ENCODE measurements at regions of chr16 and their contacts with region 1.

Region 1: GRCh38 chr16:4402439-4403132 is 13.8 kb downstream of the CORO7 start:
- DNase-seq: peak; percentile 77
- H3K4me3 Mint-ChIP-seq: no peak overlapping the region
- H3K27ac Mint-ChIP-seq: no peak overlapping the region
- H3K4me1 Mint-ChIP-seq: no peaks in the 10 kb centered on the region
- H3K27me3 Mint-ChIP-seq: no peaks in the 10 kb centered on the region
- CTCF ChIP-seq: peak; percentile 97

Region 2: DNA sequence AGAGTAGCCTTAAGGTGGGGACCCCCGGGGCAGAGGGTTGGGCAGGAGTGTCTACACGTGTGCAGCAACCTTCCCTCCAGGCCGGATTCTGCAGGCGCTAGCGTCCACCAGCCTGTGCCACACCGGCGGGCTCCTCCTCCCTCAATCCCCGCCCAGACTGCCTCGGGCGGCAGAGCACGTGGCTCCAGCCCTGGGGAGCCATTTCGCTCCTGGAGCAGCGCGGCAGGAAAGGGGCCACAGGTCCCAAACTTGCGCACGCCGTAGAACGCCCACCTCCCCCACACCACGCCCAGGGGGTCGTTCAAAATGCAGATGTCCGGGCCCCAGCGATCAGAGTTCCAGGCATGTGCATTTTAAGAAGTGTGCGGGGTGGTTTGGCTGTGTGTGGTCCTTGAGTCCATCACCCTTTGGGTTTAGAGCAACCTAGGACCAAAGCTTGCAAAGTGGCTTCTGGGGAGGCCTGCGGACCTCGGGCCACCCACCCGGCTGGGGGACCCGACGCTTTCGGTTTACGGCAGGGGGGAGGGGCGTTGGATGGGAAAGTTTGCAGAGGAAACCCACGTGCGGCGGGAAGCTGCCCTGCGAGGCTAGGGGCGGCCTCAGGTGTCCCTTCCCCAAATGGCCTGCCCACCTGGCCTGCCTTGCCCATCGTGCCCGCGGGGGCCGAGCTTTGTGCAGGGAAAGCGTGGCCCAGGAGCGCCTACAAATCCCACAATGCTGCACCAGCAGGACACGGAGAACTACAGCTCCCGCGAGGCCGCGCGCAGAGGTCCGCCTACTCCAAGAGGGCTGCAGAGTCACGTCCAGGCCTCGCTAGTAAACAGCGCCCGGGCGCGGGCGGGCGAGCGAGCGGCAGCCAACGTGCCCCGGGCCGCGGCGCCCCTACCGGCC is 131.2 kb before region 1 on chr16:
- CTCF ChIA-PET with region 1: interaction called, 4 read pairs
- POLR2A ChIA-PET with region 1: interaction called, 3 read pairs
- intact Hi-C with region 1: loop called (anchors 5 kb)
- DNase-seq: peak; percentile 92
- H3K4me3 Mint-ChIP-seq: peak overlapping the region; percentile 84
- H3K27ac Mint-ChIP-seq: peak overlapping the region; percentile 67
- H3K4me1 Mint-ChIP-seq: peaks cover 5% of the 10 kb centered on the region
- H3K27me3 Mint-ChIP-seq: no peaks in the 10 kb centered on the region
- CTCF ChIP-seq: no peak

Region 3: DNA sequence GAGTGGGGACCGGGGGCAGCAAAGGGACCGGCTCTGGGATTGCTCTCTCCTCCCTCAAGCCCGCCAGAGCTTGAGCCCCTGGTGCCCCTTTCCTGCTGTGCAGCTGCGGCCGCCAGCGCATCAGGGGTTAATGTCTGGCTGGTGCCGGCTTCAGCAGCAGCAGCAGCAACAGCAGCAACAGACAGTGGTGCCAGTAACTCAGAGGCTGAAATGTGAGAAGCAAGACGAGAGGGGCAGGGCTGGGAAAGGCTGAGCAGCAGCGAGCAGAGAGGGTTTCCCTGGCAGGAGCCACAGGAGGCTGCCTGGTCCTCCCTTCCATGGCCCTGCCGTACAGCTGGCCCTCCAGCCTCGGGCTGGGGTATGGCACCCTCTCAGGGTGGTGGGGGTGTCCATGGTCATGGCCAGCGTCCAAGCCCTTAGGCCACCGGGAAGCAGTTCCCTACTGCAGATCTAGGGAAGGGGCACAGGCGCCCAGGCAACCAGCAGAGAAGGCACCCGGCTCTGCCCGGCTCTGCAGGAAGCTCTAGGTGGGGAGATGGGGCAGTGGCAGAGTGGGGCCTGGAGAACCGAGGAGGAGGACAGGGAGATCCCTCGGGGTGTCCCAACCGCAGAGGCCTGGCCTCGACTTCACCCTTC is 108.6 kb before region 1 on chr16:
- CTCF ChIA-PET with region 1: interaction called, 31 read pairs
- POLR2A ChIA-PET with region 1: no interaction called
- intact Hi-C with region 1: loop called (anchors 5 kb)
- DNase-seq: peak; percentile 57
- H3K4me3 Mint-ChIP-seq: peak overlapping the region; percentile 39
- H3K27ac Mint-ChIP-seq: peak overlapping the region; percentile 84
- H3K4me1 Mint-ChIP-seq: peaks cover 28% of the 10 kb centered on the region
- H3K27me3 Mint-ChIP-seq: no peaks in the 10 kb centered on the region
- CTCF ChIP-seq: no peak

Region 4: DNA sequence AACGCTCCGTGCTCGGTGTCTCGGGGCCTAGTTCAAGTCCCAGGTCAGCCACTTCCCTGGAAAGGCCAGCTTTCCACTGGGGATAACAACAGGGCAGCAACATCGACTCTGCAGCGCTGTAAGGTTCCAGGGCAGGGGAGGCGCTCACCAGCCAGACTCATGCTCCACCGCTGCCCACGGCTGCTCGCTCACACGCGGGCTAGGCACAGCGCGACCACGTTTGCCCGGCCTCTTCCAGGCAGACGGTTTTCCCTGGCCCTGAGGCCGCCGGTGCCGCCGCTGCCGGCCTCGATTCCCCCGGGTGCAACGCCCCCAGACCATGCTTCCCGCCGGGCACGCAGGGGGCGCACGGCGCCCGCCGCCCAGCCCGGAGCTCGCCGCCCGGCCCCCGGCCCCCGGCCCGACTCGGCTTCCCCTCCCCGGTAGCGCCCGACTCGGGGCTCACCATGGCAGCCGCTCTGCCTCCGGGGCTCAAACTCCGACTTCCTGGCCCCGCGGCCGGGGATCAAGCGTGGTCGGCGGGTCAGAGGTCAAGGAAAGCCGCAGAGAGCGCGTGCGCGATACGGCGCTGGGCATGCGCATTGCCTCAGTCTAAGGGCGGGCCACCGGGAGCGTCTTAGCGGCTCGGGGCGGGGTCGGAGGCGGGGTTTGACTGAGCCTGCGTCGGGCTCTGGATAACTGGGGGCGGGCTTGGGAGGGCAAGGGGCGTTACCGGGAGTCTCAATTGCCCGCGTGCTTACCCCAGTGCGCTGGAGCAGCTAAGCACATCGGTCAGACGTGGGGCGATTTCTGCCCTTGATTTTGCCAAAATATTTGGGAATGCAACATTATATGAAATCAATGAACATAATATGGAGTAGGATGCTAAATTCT is 51.6 kb before region 1 on chr16 and contains the start of gene PAM16:
- CTCF ChIA-PET with region 1: interaction called, 75 read pairs
- POLR2A ChIA-PET with region 1: interaction called, 5 read pairs
- intact Hi-C with region 1: no loop called
- DNase-seq: peak; percentile 95
- H3K4me3 Mint-ChIP-seq: peak within 1 kb of the TSS; percentile 89
- H3K27ac Mint-ChIP-seq: peak within 1 kb of the TSS; percentile 81
- H3K4me1 Mint-ChIP-seq: peaks cover 8% of the 10 kb centered on the region
- H3K27me3 Mint-ChIP-seq: no peaks in the 10 kb centered on the region
- CTCF ChIP-seq: no peak
- total RNA-seq, gene PAM16: 71.8 and 117 TPM in 2 replicates

Region 5: DNA sequence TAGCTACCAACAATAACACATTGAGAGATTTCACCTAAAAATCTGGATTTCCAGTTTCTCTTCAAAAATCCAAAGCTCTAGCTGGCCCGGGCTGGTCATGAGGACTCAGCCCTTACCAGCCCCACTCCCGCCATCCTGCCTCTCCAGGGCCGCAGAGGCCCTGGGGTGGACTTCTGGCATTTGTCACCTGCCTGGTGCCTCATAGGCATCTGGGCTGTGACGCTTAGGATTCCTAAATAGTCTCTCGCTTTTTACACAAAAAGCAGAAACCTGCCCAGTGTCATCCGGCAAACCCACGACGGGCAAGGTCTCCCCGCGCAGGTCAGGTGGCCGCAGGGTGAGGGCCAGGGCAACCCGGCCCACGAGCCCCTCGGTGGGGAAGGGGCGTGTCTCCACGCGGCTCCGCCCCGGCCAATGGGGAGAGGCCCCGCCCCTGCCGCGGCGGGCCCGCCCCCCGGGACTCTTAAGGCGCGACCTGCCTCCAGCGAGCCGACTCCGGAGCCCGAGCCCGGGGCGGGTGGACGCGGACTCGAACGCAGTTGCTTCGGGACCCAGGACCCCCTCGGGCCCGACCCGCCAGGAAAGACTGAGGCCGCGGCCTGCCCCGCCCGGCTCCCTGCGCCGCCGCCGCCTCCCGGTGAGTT is 31.1 kb before region 1 on chr16 and contains the start of gene VASN:
- CTCF ChIA-PET with region 1: interaction called, 263 read pairs
- POLR2A ChIA-PET with region 1: interaction called, 4 read pairs
- intact Hi-C with region 1: no loop called
- DNase-seq: peak; percentile 68
- H3K4me3 Mint-ChIP-seq: peak within 1 kb of the TSS; percentile 69
- H3K27ac Mint-ChIP-seq: no peak within 1 kb of the TSS
- H3K4me1 Mint-ChIP-seq: peaks cover 24% of the 10 kb centered on the region
- H3K27me3 Mint-ChIP-seq: no peaks in the 10 kb centered on the region
- CTCF ChIP-seq: no peak
- total RNA-seq, gene VASN: 4.0 and 7.1 TPM in 2 replicates

Region 6: GRCh38 chr16:4416200-4417032 is 13.8 kb after region 1 on chr16 and contains the start of gene CORO7:
- CTCF ChIA-PET with region 1: interaction called, 40 read pairs
- POLR2A ChIA-PET with region 1: interaction called, 9 read pairs
- intact Hi-C with region 1: no loop called
- DNase-seq: peak; percentile 87
- H3K4me3 Mint-ChIP-seq: peak within 1 kb of the TSS; percentile 86
- H3K27ac Mint-ChIP-seq: peak within 1 kb of the TSS; percentile 60
- H3K4me1 Mint-ChIP-seq: peaks cover 14% of the 10 kb centered on the region
- H3K27me3 Mint-ChIP-seq: no peaks in the 10 kb centered on the region
- CTCF ChIP-seq: no peak
- total RNA-seq, gene CORO7: 20.3 and 24.9 TPM in 2 replicates

Region 7: DNA sequence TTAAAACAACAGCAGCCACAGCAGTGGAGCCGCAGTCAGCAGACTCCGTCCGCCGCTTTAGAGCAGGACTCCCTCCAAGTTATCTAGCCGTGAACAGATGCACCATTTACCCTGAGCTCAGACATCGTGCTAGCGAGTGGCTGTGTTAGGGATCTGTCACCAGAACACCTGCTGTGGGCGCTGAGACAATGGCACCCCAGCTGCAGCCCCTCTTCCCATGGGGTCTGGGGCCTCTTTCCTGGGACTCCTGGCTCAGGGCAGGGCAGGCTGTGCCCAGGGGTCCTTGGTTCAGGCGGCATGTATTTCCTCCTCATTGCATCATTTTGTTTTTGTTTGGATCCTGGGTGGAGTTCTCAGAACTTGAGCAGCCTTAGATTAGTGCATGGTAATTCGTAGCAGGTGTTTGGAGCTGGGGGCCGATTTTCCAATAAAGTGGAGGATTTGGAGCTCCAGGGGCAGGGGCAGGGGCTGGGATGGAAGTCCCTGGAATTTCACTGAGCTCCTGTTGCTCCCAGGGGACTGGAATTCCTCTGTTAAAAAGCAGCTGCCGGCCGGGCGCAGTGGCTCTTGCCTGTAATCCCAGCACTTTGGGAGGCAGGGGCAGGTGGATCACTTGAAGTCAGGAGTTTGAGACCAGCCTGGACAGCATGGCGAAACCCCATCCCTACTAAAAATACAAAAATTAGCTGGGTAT is 48.5 kb after region 1 on chr16:
- CTCF ChIA-PET with region 1: no interaction called
- POLR2A ChIA-PET with region 1: no interaction called
- intact Hi-C with region 1: no loop called
- DNase-seq: no peak
- H3K4me3 Mint-ChIP-seq: no peak overlapping the region
- H3K27ac Mint-ChIP-seq: no peak overlapping the region
- H3K4me1 Mint-ChIP-seq: no peaks in the 10 kb centered on the region
- H3K27me3 Mint-ChIP-seq: no peaks in the 10 kb centered on the region
- CTCF ChIP-seq: no peak